ENCODE measurements at regions of chr15 and their contacts with region 1.

Region 1: GRCh38 chr15:71278989-71279756 is 163.9 kb downstream of the THSD4 start:
- DNase-seq: peak; percentile 93
- H3K4me3 ChIP-seq: no peak overlapping the region
- H3K27ac ChIP-seq: peak overlapping the region; percentile 54
- H3K4me1 ChIP-seq: peaks cover 44% of the 10 kb centered on the region
- H3K27me3 ChIP-seq: no peaks in the 10 kb centered on the region
- CTCF ChIP-seq: no peak
- POLR2A ChIP-seq: no peak

Region 2: GRCh38 chr15:71136159-71136783 is 142.9 kb before region 1 on chr15:
- CTCF ChIA-PET with region 1: no interaction called
- POLR2A ChIA-PET with region 1: no interaction called
- dilution Hi-C with region 1: no loop called
- intact Hi-C with region 1: loop called (anchors 5 kb)
- DNase-seq: peak; percentile 56
- H3K4me3 ChIP-seq: no peak overlapping the region
- H3K27ac ChIP-seq: peak overlapping the region; percentile 81
- H3K4me1 ChIP-seq: peaks cover 48% of the 10 kb centered on the region
- H3K27me3 ChIP-seq: no peaks in the 10 kb centered on the region
- CTCF ChIP-seq: no peak
- POLR2A ChIP-seq: no peak

Region 3: DNA sequence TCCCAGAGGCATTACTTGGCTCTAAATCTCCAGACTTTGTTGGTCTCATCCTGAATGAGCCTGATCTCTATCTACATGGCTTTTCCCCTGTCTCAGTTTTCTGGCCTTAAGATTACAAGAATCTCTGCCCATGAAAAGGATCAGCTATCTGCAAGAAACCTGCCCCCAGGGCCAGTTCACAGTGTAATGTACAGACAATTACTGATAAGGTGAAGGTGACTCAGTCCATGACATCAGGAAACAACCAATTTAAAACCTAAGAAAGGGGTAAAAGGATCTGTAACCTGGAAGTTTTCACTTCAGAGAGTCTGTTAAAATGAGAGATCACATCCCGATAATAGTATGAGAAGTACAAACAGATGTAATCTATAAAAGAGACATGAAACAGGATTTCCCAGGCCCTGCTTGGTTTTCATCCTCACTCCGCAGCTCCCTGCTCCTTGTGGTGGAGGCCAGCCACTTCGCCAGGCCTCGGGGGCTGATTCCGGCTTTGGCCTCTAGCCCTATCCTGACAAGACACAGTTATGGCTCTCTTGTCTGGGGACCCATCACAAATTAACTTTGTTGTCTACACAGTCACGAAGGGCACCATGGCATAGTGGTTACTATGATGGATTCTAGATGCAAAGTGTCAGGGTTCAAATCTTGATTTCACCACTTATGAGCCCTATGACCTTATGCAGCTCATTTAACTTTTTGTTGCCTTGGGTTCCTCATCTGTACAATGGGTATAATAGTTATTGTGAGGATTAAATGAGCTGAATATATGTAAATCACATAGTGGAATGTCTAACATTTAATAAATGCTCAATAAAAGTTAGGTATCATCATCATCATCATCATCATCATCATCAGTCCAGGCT is 26.9 kb before region 1 on chr15:
- CTCF ChIA-PET with region 1: interaction called, 5 read pairs
- POLR2A ChIA-PET with region 1: no interaction called
- dilution Hi-C with region 1: no loop called
- intact Hi-C with region 1: loop called (anchors 2 kb)
- DNase-seq: peak; percentile 58
- H3K4me3 ChIP-seq: no peak overlapping the region
- H3K27ac ChIP-seq: peak overlapping the region; percentile 60
- H3K4me1 ChIP-seq: peaks cover 31% of the 10 kb centered on the region
- H3K27me3 ChIP-seq: no peaks in the 10 kb centered on the region
- CTCF ChIP-seq: no peak
- POLR2A ChIP-seq: no peak